MCF 10A (cell line): ENCODE measurements at regions of chr6 and their contacts with region 1.

Region 1: DNA sequence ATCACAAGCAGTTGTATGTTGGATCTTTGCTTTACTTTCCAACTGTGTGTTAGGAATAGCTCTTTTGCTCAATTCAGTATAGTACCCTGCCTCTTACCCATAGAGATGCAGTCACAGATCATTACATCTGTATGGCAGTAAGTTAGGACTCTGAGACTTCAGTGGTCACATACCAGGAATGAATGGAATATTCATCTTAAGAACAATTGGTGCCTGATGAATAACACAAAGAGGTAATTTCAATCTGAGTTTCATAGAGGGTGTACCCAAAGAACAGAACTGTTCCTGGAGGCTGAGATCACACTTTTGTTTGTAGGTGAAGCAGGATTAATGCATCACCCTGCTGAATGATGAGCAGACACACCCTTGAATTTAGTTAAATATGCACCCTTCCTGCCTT is 28.7 kb upstream of the KIF13A start:
- DNase-seq: no peak
- H3K4me3 Mint-ChIP-seq: no peak overlapping the region
- H3K27ac Mint-ChIP-seq: peak overlapping the region; percentile 77
- H3K4me1 Mint-ChIP-seq: peaks cover 12% of the 10 kb centered on the region
- H3K27me3 Mint-ChIP-seq: no peaks in the 10 kb centered on the region
- CTCF ChIP-seq: no peak

Region 2: DNA sequence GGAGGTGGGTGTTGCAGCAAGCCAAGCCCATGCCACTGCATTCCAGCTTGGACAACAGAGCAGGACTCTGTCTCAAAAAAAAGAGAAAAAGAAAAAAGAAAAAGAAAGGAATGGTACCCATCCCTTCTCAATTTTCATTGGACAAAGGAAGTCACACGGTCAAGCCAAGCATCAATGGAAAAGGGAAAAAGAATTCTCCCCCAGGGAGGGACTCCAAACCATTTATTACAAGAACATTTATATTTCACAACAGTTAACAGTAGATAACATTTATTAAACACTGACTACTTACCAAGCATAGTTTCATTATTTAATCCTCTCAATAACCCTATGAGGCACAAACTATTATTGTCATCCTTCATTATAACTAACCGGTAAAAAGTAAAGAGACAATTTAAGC is 22.1 kb before region 1 on chr6:
- CTCF ChIA-PET with region 1: no interaction called
- POLR2A ChIA-PET with region 1: interaction called, 10 read pairs
- intact Hi-C with region 1: no loop called
- DNase-seq: no peak
- H3K4me3 Mint-ChIP-seq: no peak overlapping the region
- H3K27ac Mint-ChIP-seq: peak overlapping the region; percentile 64
- H3K4me1 Mint-ChIP-seq: peaks cover 13% of the 10 kb centered on the region
- H3K27me3 Mint-ChIP-seq: no peaks in the 10 kb centered on the region
- CTCF ChIP-seq: no peak